Activated naive CD4-positive, alpha-beta T cell treated with anti-CD3 and anti-CD28 coated beads for 36 hours (primary cell): ENCODE measurements at regions of chr13 and their contacts with region 1.

Region 1: DNA sequence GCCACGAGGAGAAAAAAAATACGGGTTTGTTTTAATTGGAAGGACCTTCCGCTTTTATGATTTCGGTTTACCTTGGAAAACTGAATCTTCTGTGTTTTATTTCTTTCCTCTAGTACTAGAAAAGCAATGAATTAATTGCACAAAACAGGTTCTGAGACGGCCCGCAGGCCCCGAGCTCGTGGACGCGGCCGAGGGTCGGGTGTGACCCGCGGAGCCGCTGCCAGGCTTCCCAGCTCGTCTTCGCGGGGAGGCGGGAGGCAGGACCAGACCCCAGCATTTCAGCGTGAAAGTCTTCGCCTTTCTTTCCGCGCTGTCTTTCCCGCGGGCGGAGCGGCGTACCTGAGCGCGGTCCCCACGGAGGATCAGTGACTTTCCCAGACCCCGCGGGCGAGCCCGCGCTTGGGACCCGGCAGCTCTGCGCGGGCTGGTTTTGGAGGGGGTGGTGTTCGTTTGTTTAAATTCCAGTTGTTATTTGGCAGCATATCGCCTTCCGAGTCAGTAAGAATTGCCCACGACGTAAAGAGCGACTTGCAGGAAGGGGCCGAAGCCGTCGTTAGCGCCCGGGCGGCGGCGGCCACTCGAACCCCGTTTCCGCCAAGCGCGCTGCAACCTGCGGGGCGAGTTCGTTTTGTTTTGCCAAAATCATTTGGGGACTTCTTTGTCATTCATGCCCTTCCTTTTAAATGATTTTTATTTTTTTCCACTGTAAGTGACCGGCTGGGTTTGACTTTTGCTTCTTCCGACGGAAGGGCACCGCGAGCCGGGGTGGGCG is 76.2 kb downstream of the ZIC5 start:
- DNase-seq: no peak
- H3K4me3 Mint-ChIP-seq: peak overlapping the region; percentile 48
- H3K27ac Mint-ChIP-seq: no peak overlapping the region
- H3K4me1 Mint-ChIP-seq: peaks cover 3% of the 10 kb centered on the region
- H3K27me3 Mint-ChIP-seq: peaks cover 44% of the 10 kb centered on the region

Region 2: GRCh38 chr13:99871249-99871898 is 24.0 kb before region 1 on chr13:
- CTCF ChIA-PET with region 1: no interaction called
- intact Hi-C with region 1: no loop called
- DNase-seq: no peak
- H3K4me3 Mint-ChIP-seq: no peak overlapping the region
- H3K27ac Mint-ChIP-seq: no peak overlapping the region
- H3K4me1 Mint-ChIP-seq: no peaks in the 10 kb centered on the region
- H3K27me3 Mint-ChIP-seq: no peaks in the 10 kb centered on the region

Region 3: DNA sequence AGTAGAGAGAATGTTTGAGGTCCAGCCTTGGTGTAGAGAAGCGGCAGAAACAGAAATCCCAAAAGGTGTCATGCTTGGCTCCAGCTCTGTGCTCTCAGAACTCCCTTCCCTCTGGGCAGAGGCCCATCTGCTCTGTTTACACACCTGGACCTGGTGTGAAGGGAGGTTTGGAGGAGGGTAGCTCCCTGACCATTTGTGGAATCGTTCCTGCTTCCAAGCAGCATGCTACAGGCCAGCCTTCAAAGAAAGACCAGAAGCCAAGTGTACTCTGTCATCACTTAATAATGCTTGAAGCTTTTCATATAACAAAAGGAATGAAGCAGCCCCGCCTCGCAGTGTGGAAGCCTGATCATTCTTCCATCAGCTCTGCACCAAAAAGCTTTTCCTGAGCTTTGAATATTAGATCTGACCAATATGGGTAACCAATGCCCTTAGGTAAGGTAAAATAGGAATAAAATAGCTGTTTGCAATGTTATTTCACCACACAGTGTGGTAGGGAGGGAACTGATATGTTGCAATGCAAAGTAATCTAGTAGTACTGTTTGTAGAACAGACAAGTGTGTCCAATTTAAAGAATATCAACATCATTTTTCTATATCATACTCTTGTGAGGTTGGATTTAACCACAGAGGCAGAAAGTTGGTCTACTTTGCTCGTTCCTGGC is 12.9 kb after region 1 on chr13:
- CTCF ChIA-PET with region 1: interaction called, 30 read pairs
- intact Hi-C with region 1: no loop called
- DNase-seq: no peak
- H3K4me3 Mint-ChIP-seq: no peak overlapping the region
- H3K27ac Mint-ChIP-seq: no peak overlapping the region
- H3K4me1 Mint-ChIP-seq: peaks cover 14% of the 10 kb centered on the region
- H3K27me3 Mint-ChIP-seq: peaks cover 23% of the 10 kb centered on the region

Region 4: DNA sequence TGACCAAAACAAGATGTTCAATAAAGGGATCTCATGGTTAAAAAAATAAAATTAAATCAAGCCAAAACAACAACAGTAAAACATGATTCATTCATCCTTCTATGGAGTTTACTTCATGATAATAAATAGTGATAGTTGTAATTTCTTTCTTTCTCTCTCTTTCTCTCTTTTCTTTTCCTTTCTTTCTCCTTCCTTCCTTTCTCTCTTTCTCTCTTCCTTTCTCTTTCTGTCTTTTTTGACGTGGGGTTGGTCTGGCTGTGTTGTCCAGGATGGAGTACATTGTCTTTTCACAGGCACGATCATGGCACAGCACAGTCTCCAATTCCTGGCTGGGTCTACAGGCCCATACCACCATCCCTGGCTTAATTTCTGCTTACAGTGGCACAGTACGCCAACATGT is 164.4 kb after region 1 on chr13:
- CTCF ChIA-PET with region 1: no interaction called
- intact Hi-C with region 1: no loop called
- DNase-seq: no peak
- H3K4me3 Mint-ChIP-seq: no peak overlapping the region
- H3K27ac Mint-ChIP-seq: no peak overlapping the region
- H3K4me1 Mint-ChIP-seq: no peaks in the 10 kb centered on the region
- H3K27me3 Mint-ChIP-seq: peaks cover 4% of the 10 kb centered on the region